Panc1 (cell line): ENCODE measurements at regions of chr1 and their contacts with region 1.

Region 1: GRCh38 chr1:203145333-203146041 is 18.0 kb downstream of the ADORA1 start:
- DNase-seq: no peak
- ATAC-seq: peak; percentile 29; the same call in 1 of the 2 replicates
- H3K4me3 ChIP-seq: no peak overlapping the region
- H3K27ac ChIP-seq: peak overlapping the region; percentile 55
- H3K4me1 ChIP-seq: peaks cover 25% of the 10 kb centered on the region
- H3K27me3 ChIP-seq: no peaks in the 10 kb centered on the region
- CTCF ChIP-seq: no peak

Region 2: DNA sequence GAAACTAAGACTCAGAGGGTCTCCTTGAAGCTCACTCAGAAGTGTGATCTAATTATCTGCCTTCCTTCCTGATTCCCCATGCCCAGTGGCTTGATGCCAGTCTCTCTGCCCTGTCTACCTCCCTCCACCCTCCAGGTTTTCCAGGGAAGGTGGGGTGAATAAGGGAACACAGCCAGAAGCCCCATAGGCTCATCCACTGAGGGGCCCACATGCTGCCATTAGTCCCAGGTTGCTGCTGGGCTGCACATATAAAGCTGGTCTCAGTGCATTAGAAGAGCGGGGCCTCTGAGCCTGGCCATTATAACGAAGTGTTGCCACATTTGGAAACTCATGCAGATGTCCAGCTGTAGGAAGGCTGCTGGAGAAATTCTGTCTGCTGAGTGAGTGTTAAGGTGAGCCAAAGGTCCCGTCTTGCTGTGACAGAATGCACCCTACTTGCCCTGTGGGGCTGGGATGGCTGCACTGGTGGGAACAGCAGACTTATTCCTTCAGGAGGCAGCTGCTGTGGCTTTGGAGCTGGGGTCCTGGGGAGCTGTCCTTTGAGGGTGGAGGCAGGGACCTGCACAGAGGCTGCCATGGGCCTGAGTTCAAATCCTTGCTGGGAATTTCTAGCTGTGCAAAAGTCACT is 15.0 kb before region 1 on chr1:
- CTCF ChIA-PET with region 1: interaction called, 13 read pairs
- POLR2A ChIA-PET with region 1: no interaction called
- in situ Hi-C with region 1: no loop called
- intact Hi-C with region 1: no loop called
- DNase-seq: no peak
- ATAC-seq: no peak
- H3K4me3 ChIP-seq: no peak overlapping the region
- H3K27ac ChIP-seq: no peak overlapping the region
- H3K4me1 ChIP-seq: peaks cover 18% of the 10 kb centered on the region
- H3K27me3 ChIP-seq: peaks cover 4% of the 10 kb centered on the region
- CTCF ChIP-seq: no peak